Left ventricle myocardium superior (tissue), 1 donor: ENCODE measurements at regions of chr9 and their contacts with region 1.

Region 1: GRCh38 chr9:81689343-81690190 is at the start of gene TLE1:
- DNase-seq: peak; percentile 99
- ATAC-seq: peak; percentile 97
- total RNA-seq, gene TLE1: 10.2 TPM

Region 2: GRCh38 chr9:81465468-81466011 is 224.0 kb before region 1 on chr9:
- intact Hi-C with region 1: no loop called
- DNase-seq: no peak
- ATAC-seq: peak; percentile 94

Region 3: GRCh38 chr9:81529556-81530195 is 159.9 kb before region 1 on chr9:
- intact Hi-C with region 1: loop called (anchors 10 kb)
- DNase-seq: no peak
- ATAC-seq: peak; percentile 58

Region 4: DNA sequence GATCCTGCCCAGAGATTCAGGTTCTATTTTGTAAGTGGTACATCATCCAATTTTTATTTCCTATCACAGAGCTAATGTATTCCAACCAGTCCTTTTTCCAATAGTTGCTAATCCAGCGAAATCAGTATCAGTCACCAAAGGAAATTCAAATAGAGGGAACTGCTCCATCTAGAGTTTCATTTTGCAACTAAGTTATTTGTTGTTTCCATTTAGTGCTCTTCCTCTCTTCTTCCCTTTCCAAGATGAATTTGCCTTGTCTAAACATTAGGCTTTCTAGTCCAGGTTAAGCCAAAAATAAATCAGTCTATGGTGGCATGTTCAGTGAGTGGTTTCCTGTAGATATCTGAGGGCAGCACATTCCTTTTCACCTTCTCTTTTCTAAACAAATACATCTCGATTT is 158.9 kb after region 1 on chr9:
- intact Hi-C with region 1: no loop called
- DNase-seq: no peak
- ATAC-seq: no peak